ENCODE measurements at regions of chr3 and their contacts with region 1.

Region 1: GRCh38 chr3:170811928-170812591 is 57.9 kb downstream of the RPL22L1 start:
- DNase-seq: peak; percentile 47
- H3K4me3 ChIP-seq: no peak overlapping the region
- CTCF ChIP-seq: peak; percentile 75

Region 2: GRCh38 chr3:170440346-170440745 is 371.7 kb before region 1 on chr3:
- CTCF ChIA-PET with region 1: interaction called, 46 read pairs
- POLR2A ChIA-PET with region 1: no interaction called
- DNase-seq: no peak
- H3K4me3 ChIP-seq: no peak overlapping the region
- CTCF ChIP-seq: no peak

Region 3: GRCh38 chr3:170542704-170543103 is 269.4 kb before region 1 on chr3:
- CTCF ChIA-PET with region 1: interaction called, 31 read pairs
- POLR2A ChIA-PET with region 1: no interaction called
- DNase-seq: no peak
- H3K4me3 ChIP-seq: no peak overlapping the region
- CTCF ChIP-seq: no peak

Region 4: GRCh38 chr3:170614214-170614966 is 197.7 kb before region 1 on chr3:
- CTCF ChIA-PET with region 1: interaction called, 47 read pairs
- POLR2A ChIA-PET with region 1: no interaction called
- DNase-seq: peak; percentile 65
- H3K4me3 ChIP-seq: no peak overlapping the region
- CTCF ChIP-seq: no peak

Region 5: DNA sequence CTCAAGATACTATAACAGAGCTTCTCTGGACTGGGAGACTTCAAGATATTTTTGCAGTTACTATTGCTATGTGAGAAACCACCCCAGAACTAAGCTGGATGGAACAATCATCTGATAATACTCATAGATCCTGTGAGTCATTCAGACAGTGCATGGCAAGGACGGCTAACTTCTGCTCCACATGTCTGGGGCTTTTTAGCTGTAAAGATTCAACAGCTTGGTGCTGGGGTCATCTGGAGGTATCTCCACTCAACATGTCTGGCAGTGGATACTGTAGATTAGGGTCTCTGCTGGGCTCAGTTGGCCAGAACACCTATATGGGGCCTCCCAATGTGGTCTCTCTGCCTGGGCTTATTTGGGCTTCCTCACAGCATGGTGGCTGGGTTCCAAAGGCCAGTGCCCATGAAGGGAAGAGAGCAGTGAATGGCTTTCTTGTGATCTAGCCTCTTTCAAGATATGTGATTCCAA is 108.9 kb before region 1 on chr3:
- CTCF ChIA-PET with region 1: interaction called, 13 read pairs
- POLR2A ChIA-PET with region 1: no interaction called
- DNase-seq: peak; percentile 82
- H3K4me3 ChIP-seq: no peak overlapping the region
- CTCF ChIP-seq: no peak

Region 6: DNA sequence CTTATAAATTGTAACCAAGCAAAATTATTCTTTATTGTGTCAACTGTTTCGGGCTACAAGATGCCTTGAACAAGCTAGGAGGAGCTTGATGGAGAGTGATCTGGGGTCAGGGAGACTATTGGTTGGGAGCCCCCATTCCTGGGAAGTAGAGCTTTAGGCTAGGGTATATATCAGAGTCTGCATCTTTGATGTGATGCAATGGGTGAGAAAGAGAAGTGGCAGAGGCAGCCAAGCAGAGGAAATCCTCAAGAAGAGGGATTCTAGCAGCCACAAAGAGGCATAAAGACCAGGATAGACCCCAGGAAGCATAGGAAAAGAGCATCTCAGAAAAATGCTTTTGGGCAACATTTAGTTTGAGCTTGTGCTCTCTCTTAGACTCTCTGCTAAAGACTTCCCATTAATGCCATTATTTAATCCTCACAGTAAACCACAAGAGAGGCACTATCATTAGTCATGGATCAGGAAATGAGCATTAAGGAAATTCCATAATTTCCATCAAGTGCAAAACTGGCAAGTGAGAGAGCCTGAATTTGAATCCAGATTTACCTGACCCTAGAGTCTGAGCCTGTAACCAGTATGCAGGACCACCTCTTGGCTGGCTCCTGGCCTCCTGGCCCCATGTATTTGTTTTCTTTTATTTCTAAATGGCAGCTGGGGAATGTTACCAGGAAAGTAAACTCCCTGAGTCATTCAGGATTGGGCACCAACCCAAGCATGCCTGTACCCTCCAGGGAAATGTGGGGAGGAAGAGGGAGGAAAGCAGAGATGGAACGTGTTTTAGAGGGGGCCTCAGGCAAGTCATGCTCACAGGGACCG is 60.8 kb before region 1 on chr3:
- CTCF ChIA-PET with region 1: interaction called, 26 read pairs
- POLR2A ChIA-PET with region 1: no interaction called
- DNase-seq: no peak
- H3K4me3 ChIP-seq: no peak overlapping the region
- CTCF ChIP-seq: no peak

Region 7: DNA sequence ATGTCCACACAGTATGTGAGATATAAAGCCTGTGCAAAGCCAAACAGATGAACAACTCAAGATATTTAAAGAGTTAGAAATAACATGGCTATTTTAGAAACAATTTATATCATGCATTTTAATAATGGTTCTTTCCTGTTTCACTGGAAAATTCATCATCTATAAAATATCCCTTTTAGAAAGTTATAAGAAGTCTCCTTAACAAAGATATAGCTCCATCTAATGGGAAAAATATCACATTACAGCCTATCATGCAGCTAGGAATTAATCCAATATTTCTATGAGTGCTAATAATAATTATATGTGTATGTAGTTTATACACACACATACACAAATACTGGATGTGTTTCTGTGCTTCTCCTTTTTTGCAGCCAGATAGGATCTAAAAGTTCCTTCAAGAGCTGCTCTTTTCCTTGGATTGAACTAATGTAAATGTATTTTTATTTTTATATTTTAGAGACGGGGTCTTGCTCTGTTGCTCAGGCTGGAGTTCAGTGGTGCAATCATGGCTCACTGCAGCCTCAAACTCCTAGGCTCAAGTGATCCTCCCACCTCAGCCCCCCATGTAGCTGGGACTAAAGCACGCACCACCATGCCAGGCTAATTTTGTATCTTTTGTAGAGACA is 36.3 kb after region 1 on chr3:
- CTCF ChIA-PET with region 1: interaction called, 100 read pairs
- POLR2A ChIA-PET with region 1: no interaction called
- DNase-seq: no peak
- H3K4me3 ChIP-seq: no peak overlapping the region
- CTCF ChIP-seq: peak; percentile 14

Region 8: GRCh38 chr3:171230865-171231264 is 418.8 kb after region 1 on chr3:
- CTCF ChIA-PET with region 1: no interaction called
- POLR2A ChIA-PET with region 1: no interaction called
- DNase-seq: no peak
- H3K4me3 ChIP-seq: no peak overlapping the region
- CTCF ChIP-seq: no peak

Region 9: GRCh38 chr3:171491361-171491760 is 679.3 kb after region 1 on chr3:
- CTCF ChIA-PET with region 1: no interaction called
- POLR2A ChIA-PET with region 1: no interaction called
- DNase-seq: no peak
- H3K4me3 ChIP-seq: no peak overlapping the region
- CTCF ChIP-seq: no peak